GM12878 (cell line): ENCODE measurements at regions of chr18 and their contacts with region 1.

Region 1: DNA sequence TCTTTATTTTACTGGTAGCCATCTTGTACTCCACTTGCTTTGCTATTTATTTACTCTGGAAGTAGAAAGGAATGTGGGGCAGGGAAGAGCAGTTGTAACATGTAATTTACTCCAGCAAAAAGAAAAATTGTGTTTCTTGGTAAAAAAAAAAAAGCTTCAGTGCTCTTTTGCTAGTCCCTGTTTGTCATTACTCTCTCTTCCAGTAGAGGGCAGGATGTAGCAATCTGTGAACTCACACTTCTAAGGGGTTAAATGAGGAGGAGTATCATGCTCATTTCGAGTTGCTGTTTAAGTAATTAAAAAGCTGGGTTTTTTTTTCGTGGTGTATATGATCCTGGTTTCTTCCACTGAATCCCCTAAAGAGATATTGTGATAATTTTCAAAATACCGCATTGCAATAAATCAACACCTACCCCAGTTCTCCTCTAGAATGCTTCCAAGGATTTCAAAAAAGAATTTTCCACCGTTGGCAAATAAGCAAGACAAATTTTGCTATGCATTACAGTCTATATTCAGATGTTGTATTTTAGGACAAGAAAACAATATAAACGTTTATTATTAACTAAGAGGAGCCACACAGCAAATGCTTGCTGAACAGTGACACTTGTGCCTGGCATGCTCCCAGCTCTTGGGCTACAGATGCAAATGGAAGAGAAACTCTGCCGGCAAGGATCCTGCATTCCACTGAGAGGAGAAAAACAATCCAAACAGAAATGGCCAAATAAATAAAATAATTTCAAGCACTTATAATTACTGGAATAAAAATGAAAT is 261.6 kb downstream of the ASXL3 start:
- DNase-seq: no peak
- ATAC-seq: peak; percentile 72
- H3K4me3 ChIP-seq: no peak overlapping the region
- H3K27ac ChIP-seq: no peak overlapping the region
- H3K4me1 ChIP-seq: no peaks in the 10 kb centered on the region
- H3K27me3 ChIP-seq: no peaks in the 10 kb centered on the region
- CTCF ChIP-seq: peak; percentile 68 to 78 (median 75)
- EP300 ChIP-seq: no peak
- POLR2A ChIP-seq: no peak
- RAD21 ChIP-seq: peak; percentile 80

Region 2: GRCh38 chr18:33871363-33872025 is 31.9 kb after region 1 on chr18:
- CTCF ChIA-PET with region 1: interaction called, 8 read pairs
- POLR2A ChIA-PET with region 1: no interaction called
- RAD21 ChIA-PET with region 1: interaction called, 8 read pairs
- SMC1A ChIA-PET with region 1: interaction called, 44 read pairs
- in situ Hi-C with region 1: no loop called
- intact Hi-C with region 1: no loop called
- DNase-seq: no peak
- ATAC-seq: peak; percentile 73
- H3K4me3 ChIP-seq: no peak overlapping the region
- H3K27ac ChIP-seq: no peak overlapping the region
- H3K4me1 ChIP-seq: no peaks in the 10 kb centered on the region
- H3K27me3 ChIP-seq: no peaks in the 10 kb centered on the region
- CTCF ChIP-seq: no peak
- EP300 ChIP-seq: no peak
- POLR2A ChIP-seq: no peak
- RAD21 ChIP-seq: no peak

Region 3: DNA sequence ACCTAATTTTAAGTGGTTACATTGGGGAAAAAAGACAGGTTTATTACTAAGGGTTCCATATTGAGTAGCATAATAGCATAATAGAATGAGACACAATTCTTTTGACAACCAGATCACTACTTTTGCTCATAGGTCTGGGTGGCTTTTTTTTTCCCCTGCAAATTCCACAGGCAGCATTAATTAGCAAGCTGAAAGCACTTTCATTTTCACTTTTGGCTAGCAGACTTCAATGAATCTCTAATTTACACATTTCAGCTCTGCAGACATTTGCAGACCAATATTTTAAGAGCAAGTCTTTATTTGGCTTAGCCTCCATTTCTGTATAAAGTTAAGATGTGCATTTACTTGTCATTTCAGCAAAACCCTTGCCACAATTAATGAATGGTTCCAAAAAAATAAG is 199.6 kb after region 1 on chr18:
- CTCF ChIA-PET with region 1: interaction called, 5 read pairs
- POLR2A ChIA-PET with region 1: no interaction called
- RAD21 ChIA-PET with region 1: interaction called, 5 read pairs
- SMC1A ChIA-PET with region 1: interaction called, 5 read pairs
- in situ Hi-C with region 1: no loop called
- intact Hi-C with region 1: loop called (anchors 5 kb)
- DNase-seq: peak; percentile 21
- ATAC-seq: peak; percentile 66
- H3K4me3 ChIP-seq: no peak overlapping the region
- H3K27ac ChIP-seq: no peak overlapping the region
- H3K4me1 ChIP-seq: 0 out of 2 replicates have a peak, but pooled peaks cover 2% of the 10 kb centered on the region
- H3K27me3 ChIP-seq: no peaks in the 10 kb centered on the region
- CTCF ChIP-seq: no peak
- EP300 ChIP-seq: no peak
- POLR2A ChIP-seq: no peak
- RAD21 ChIP-seq: no peak

Region 4: GRCh38 chr18:34117319-34117718 is 277.7 kb after region 1 on chr18:
- CTCF ChIA-PET with region 1: interaction called, 79 read pairs
- POLR2A ChIA-PET with region 1: interaction called, 5 read pairs
- RAD21 ChIA-PET with region 1: interaction called, 74 read pairs
- SMC1A ChIA-PET with region 1: interaction called, 83 read pairs
- in situ Hi-C with region 1: no loop called
- intact Hi-C with region 1: loop called (anchors 2 kb)
- DNase-seq: no peak
- ATAC-seq: peak; percentile 13; the same call in 2 of the 3 replicates
- H3K4me3 ChIP-seq: no peak overlapping the region
- H3K27ac ChIP-seq: no peak overlapping the region
- H3K4me1 ChIP-seq: no peaks in the 10 kb centered on the region
- H3K27me3 ChIP-seq: no peaks in the 10 kb centered on the region
- CTCF ChIP-seq: no peak
- EP300 ChIP-seq: no peak
- POLR2A ChIP-seq: no peak
- RAD21 ChIP-seq: no peak

Region 5: GRCh38 chr18:34224423-34225217 is 385.0 kb after region 1 on chr18 and contains the start of gene NOL4:
- CTCF ChIA-PET with region 1: interaction called, 13 read pairs
- POLR2A ChIA-PET with region 1: no interaction called
- RAD21 ChIA-PET with region 1: interaction called, 3 read pairs
- SMC1A ChIA-PET with region 1: interaction called, 3 read pairs
- in situ Hi-C with region 1: no loop called
- intact Hi-C with region 1: loop called (anchors 5 kb)
- DNase-seq: no peak
- ATAC-seq: peak; percentile 45
- H3K4me3 ChIP-seq: no peak within 1 kb of the TSS
- H3K27ac ChIP-seq: no peak within 1 kb of the TSS
- H3K4me1 ChIP-seq: no peaks in the 10 kb centered on the region
- H3K27me3 ChIP-seq: peaks cover 0 to 13% of the 10 kb centered on the region in 2 experiments
- CTCF ChIP-seq: peak in 2 of 3 experiments; percentile 51 to 66; a peak in 4 of 6 replicates
- EP300 ChIP-seq: no peak
- POLR2A ChIP-seq: no peak
- RAD21 ChIP-seq: peak; percentile 6; the same call in 1 of the 2 replicates
- polyA plus RNA-seq, gene NOL4: 1.3 to 2.8 TPM